ENCODE measurements at regions of chr9 and their contacts with region 1.

Region 1: DNA sequence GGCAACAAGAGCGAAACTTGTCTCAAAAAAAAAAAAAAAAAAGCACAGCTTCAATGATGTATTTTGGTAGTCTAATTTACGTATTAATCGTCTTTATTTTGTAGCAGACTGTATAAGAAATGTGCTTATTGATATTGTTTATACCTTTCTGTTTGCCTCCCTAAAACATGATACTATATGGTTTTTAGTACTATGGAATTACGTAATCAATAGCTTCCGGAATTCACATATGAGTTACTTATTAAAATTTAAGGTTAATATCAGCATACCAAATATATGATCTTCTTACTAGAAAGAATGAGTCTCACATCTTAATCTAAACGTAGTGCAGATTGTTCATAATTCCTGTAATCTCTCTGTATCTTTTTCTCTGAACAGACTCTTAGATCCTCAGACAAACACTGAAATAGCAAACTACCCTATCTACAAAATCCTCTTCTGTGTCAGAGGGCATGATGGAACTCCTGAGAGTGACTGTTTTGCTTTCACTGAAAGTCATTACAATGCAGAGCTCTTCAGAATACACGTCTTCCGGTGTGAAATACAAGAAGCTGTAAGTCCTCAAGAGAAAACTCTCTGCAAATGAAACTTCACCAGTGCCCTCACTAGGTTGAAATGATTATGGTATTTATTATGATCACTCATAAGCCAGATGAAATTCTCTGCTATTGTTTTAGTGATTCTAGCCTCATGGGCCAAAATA is 44.4 kb upstream of the GPR21 start:
- DNase-seq: no peak
- H3K4me3 ChIP-seq: no peak overlapping the region
- H3K27ac ChIP-seq: peak overlapping the region in 1 of 3 donors; percentile 39
- H3K4me1 ChIP-seq: no peaks in the 10 kb centered on the region
- H3K27me3 ChIP-seq: no peaks in the 10 kb centered on the region
- CTCF ChIP-seq: no peak
- POLR2A ChIP-seq: no peak

Region 2: DNA sequence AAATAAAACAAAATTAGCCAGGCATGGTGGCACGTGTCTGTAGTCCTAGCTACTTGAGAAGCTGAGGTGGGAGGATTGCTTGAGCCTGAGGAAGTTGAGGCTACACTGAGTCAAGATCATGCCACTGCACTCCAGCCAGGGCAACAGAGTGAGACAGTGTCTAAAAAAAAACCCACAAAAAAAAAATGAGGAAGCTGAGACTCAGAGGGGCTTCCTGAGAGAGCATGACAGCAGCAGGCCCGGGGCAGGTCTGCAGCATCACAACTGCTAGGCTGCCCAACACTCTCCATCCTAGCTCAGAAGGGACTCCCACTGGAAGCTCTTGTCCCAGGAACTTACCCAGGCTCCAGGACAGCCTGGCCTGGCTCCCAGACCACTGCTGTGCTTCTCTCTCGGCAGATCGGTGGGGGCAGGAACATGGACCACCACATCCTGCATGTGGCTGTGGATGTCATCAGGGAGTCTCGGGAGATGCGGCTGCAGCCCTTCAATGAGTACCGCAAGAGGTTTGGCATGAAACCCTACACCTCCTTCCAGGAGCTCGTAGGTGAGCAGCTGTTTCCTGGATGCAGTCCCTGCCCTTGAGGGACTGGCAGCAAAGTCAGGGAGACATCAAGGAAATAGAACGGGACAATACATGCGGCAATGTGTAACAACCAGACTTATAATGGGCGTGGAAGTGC is 599.1 kb before region 1 on chr9:
- intact Hi-C with region 1: no loop called
- DNase-seq: no peak
- H3K4me3 ChIP-seq: no peak overlapping the region
- H3K27ac ChIP-seq: no peak overlapping the region
- H3K4me1 ChIP-seq: no peaks in the 10 kb centered on the region
- H3K27me3 ChIP-seq: no peaks in the 10 kb centered on the region
- CTCF ChIP-seq: no peak
- POLR2A ChIP-seq: no peak

Region 3: GRCh38 chr9:122931226-122932121 is 57.6 kb before region 1 on chr9 and contains the start of gene ZBTB26:
- intact Hi-C with region 1: loop called (anchors 10 kb)
- DNase-seq: peak; percentile 97
- H3K4me3 ChIP-seq: peak within 1 kb of the TSS; percentile 23 to 80 (median 64)
- H3K27ac ChIP-seq: peak within 1 kb of the TSS; percentile 75 to 85 (median 85)
- H3K4me1 ChIP-seq: peaks cover 22 to 24% of the 10 kb centered on the region in 2 donors
- H3K27me3 ChIP-seq: no peaks in the 10 kb centered on the region
- CTCF ChIP-seq: no peak
- POLR2A ChIP-seq: peak; percentile 19 to 76
- total RNA-seq, gene ZBTB26: 10.9 to 15.6 (median 12.7) TPM

Region 4: DNA sequence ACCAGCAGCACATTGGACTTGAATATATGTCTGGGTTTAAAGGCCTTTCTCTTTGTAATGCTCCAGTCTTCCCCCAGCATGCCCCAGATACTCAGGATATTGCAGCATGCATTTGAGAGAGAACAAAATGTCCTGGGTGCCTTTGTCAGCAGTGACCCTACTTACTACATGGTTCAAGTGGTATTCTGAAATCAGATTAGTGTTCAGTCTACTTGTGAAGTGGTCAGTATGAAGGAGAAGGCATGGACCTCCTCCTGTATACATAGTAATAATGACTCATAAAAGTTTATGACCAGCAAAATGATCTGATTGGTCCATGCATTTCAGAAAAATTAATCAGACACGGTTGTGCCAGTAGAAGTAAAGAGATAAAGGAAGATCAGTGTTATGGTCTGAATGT is 69.8 kb after region 1 on chr9:
- intact Hi-C with region 1: no loop called
- DNase-seq: peak; percentile 62 to 73
- H3K4me3 ChIP-seq: no peak overlapping the region
- H3K27ac ChIP-seq: peak overlapping the region; percentile 77 to 88 (median 86)
- H3K4me1 ChIP-seq: peaks cover 58 to 73% of the 10 kb centered on the region in 2 donors
- H3K27me3 ChIP-seq: no peaks in the 10 kb centered on the region
- CTCF ChIP-seq: peak in 1 of 6 experiments; percentile 8
- POLR2A ChIP-seq: peak in 1 of 2 donors; percentile 47